ENCODE measurements at regions of chr18 and their contacts with region 1.

Region 1: GRCh38 chr18:22563098-22563707 is 145.5 kb upstream of the CTAGE1 start:
- DNase-seq: no peak
- H3K4me3 Mint-ChIP-seq: no peak overlapping the region
- H3K27ac Mint-ChIP-seq: no peak overlapping the region
- H3K4me1 Mint-ChIP-seq: peaks cover 2% of the 10 kb centered on the region
- H3K27me3 Mint-ChIP-seq: peaks cover 23% of the 10 kb centered on the region

Region 2: GRCh38 chr18:21897811-21898210 is 665.4 kb before region 1 on chr18:
- CTCF ChIA-PET with region 1: no interaction called
- intact Hi-C with region 1: loop called (anchors 1 kb)
- DNase-seq: peak; percentile 46
- H3K4me3 Mint-ChIP-seq: no peak overlapping the region
- H3K27ac Mint-ChIP-seq: no peak overlapping the region
- H3K4me1 Mint-ChIP-seq: peaks cover 5% of the 10 kb centered on the region
- H3K27me3 Mint-ChIP-seq: peaks cover 11% of the 10 kb centered on the region

Region 3: DNA sequence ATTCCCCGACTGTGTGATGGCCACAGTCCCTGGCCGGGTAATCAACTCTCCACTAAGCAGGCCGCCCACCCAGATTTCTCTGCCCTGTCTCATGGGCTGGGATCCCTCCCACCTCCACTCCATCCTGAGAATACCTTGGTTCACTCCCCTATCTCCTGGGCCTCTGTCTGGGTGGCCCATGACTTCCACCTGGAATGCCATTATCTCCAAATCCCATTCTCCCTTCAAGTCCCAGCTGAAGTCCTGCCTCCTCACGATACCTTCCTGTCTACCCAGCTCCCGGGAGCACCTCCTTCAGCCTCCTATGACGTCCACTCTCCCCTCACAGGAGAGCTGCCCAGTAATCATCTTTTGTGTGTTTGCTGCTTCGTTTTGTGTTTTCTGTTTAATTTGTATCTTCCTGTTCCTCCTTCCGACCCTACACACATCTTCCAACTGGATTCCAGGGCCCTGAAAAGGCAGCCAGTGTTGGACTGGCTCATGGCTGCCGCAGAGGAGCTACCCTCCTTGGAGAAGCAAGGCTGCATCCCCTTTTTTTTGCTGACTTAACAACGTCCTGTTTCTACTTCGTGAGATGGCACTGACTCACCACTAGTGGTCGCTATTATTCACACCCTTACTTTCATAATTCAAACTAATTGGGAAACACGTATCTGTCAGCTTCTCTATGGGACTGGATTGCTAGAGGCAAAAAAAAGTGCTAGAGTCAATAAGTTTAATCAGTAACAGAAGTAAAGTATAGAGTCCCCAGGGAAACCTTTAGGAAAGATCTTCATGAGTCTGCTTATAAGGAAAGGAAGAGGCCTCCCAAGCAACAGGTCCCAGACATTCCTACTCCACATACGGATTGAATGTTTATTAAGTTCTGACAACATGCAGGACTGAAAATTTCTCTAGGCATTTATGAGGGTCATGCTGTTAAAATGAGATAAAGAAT is 565.7 kb before region 1 on chr18:
- CTCF ChIA-PET with region 1: no interaction called
- intact Hi-C with region 1: loop called (anchors 1 kb)
- DNase-seq: peak; percentile 9
- H3K4me3 Mint-ChIP-seq: no peak overlapping the region
- H3K27ac Mint-ChIP-seq: no peak overlapping the region
- H3K4me1 Mint-ChIP-seq: peaks cover 2% of the 10 kb centered on the region
- H3K27me3 Mint-ChIP-seq: no peaks in the 10 kb centered on the region

Region 4: GRCh38 chr18:22703883-22704585 is 140.8 kb after region 1 on chr18:
- CTCF ChIA-PET with region 1: no interaction called
- intact Hi-C with region 1: loop called (anchors 10 kb)
- DNase-seq: peak; percentile 13
- H3K4me3 Mint-ChIP-seq: no peak overlapping the region
- H3K27ac Mint-ChIP-seq: no peak overlapping the region
- H3K4me1 Mint-ChIP-seq: no peaks in the 10 kb centered on the region
- H3K27me3 Mint-ChIP-seq: peaks cover 6% of the 10 kb centered on the region

Region 5: GRCh38 chr18:22765896-22766295 is 202.7 kb after region 1 on chr18:
- CTCF ChIA-PET with region 1: no interaction called
- intact Hi-C with region 1: no loop called
- DNase-seq: no peak
- H3K4me3 Mint-ChIP-seq: no peak overlapping the region
- H3K27ac Mint-ChIP-seq: no peak overlapping the region
- H3K4me1 Mint-ChIP-seq: no peaks in the 10 kb centered on the region
- H3K27me3 Mint-ChIP-seq: peaks cover 25% of the 10 kb centered on the region